Uterus (tissue), 4 donors: ENCODE measurements at regions of chr4 and their contacts with region 1.

Region 1: DNA sequence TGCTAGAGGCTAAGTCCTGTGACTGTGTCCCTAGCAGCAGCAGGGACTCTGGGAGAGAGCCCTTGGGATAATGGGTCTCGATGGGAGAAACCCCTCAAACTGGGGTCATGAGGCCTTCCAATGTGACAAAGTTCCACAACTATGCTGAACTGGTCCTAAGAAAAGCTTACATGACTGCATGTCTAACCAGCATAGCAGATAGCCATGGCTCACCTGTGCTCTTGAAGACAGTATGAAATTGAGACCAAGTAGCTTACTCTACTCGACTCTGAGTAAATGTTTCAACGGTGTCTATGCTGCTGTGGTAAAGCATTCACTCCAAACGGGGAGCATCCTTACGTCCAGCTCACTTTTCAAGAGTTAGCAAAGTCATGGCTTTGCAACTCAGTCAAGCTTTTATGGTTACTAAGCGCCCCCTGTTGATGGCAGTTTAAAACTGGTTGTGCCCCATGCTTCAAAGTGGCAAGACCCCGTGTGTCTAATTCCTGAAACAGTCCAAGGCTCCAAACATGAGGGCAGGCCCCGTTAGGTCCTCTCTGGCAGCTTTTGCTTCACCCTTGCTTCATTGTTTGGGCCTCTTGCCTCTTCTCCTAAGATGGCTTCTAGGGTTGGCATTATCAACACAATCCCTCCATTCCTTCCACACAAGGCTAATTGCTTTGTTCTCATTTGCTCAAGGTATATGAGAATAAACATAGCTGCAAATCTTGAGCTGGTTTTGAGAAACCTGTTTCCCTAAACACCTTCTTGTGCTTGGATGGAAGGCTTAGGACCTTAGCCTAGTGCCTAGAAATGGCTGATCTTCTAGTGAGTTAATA is 46.6 kb downstream of the CCNG2 start:
- DNase-seq: peak; percentile 40 to 70
- H3K4me3 ChIP-seq: no peak overlapping the region
- H3K27ac ChIP-seq: no peak overlapping the region
- H3K4me1 ChIP-seq: no peaks in the 10 kb centered on the region
- H3K27me3 ChIP-seq: no peaks in the 10 kb centered on the region
- CTCF ChIP-seq: peak; percentile 59 to 84 (median 68)
- POLR2A ChIP-seq: no peak

Region 2: GRCh38 chr4:77095101-77095821 is 108.3 kb before region 1 on chr4:
- intact Hi-C with region 1: loop called (anchors 10 kb)
- DNase-seq: peak; percentile 66 to 80
- H3K4me3 ChIP-seq: no peak overlapping the region
- H3K27ac ChIP-seq: peak overlapping the region; percentile 25 to 37
- H3K4me1 ChIP-seq: no peaks in the 10 kb centered on the region
- H3K27me3 ChIP-seq: no peaks in the 10 kb centered on the region
- CTCF ChIP-seq: peak; percentile 75 to 79 (median 77)
- POLR2A ChIP-seq: no peak